GM10248 (cell line): ENCODE measurements at regions of chr6 and their contacts with region 1.

Region 1: GRCh38 chr6:85354761-85355618 is 94.9 kb upstream of the NT5E start:
- DNase-seq: peak; percentile 57
- CTCF ChIP-seq: peak; percentile 98

Region 2: DNA sequence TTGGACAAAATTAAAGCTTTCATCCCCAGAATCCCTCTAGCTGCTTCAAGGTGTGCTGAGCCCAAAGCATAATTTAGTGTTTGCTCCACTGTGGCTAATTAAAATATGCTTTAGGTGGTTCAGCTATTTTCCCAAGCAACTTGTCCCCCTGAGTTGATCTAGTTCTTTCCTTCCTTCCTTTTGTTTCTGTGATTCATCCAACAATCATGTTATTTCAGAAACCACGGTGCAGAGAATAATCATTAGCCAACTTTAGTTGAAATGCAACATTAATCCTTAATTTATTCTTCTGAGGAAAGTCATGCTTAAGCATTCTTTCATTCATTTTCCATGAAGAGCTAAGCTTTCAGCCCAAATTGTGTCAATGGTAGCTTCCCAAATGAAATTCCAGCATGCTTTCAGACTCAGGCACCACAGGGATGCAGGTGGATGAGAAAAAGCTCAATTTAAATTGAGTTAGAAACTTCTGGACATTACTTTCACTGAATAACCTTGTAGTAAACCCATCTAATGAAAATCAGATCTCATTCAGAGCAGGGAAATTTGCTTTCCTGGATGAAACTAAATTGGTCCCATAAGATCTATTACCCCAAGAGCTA is 114.1 kb before region 1 on chr6:
- CTCF ChIA-PET with region 1: no interaction called
- POLR2A ChIA-PET with region 1: no interaction called
- DNase-seq: no peak
- CTCF ChIP-seq: no peak

Region 3: DNA sequence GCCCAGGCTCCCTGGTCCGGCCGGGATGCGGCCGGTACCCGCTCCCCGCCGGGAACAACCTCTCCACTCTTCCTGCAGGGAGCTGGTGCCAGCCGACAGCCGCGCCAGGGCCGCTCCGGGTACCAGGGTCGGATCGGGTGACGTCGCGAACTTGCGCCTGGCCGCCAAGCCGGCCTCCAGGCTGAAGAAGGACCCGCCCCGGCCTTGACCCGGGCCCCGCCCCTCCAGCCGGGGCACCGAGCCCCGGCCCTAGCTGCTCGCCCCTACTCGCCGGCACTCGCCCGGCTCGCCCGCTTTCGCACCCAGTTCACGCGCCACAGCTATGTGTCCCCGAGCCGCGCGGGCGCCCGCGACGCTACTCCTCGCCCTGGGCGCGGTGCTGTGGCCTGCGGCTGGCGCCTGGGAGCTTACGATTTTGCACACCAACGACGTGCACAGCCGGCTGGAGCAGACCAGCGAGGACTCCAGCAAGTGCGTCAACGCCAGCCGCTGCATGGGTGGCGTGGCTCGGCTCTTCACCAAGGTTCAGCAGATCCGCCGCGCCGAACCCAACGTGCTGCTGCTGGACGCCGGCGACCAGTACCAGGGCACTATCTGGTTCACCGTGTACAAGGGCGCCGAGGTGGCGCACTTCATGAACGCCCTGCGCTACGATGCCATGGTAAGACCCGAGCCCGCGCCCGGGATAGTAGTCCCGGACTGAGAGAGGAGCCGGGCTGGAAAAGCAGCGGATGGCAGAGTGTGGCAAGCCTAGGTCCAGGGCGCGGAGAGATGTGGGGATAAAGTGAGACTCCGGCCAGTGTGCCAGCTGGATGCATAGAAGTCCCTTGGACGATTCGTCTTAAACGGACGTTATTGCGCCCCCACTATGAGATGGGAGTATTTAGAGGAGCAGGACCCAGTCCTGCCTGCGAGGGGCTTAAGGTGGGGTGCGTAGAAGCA is 95.1 kb after region 1 on chr6 and contains the start of gene NT5E:
- CTCF ChIA-PET with region 1: interaction called, 14 read pairs
- POLR2A ChIA-PET with region 1: no interaction called
- DNase-seq: peak; percentile 87
- CTCF ChIP-seq: peak; percentile 30

Region 4: DNA sequence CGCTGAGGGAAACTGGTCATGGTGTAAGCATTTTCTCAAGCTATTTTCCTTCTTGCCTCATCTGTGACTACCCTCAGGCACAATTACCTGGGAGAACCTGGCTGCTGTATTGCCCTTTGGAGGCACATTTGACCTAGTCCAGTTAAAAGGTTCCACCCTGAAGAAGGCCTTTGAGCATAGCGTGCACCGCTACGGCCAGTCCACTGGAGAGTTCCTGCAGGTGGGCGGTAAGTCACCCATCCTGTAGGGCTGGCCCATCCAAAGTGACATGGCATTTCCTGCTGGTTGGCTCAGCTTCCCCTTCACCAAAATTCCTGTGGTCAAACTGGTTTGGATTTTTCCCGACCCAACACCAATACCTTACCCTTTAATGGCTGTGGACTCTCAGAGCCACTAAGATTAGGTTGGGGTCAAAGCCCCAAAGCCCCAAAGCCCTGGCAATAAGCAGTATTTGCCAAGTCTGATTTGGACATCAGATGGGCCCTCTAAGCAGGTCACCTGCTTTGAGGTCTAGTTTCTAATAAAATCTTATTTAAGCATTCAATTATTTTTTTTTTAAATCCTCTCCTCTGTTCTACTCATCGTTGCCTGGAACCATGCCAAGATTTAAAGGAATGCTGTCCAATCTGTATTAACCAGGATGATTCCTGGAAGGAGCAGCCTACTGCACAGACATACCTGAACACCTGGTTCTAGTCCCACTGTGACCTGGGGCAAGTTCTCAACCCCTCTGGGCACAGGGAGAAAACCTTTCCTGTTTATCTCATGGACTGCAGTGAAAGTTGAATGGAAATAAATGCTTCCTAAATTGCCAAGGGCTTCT is 135.7 kb after region 1 on chr6:
- CTCF ChIA-PET with region 1: interaction called, 82 read pairs
- POLR2A ChIA-PET with region 1: no interaction called
- DNase-seq: no peak
- CTCF ChIP-seq: no peak

Region 5: GRCh38 chr6:85537055-85537494 is 182.1 kb after region 1 on chr6:
- CTCF ChIA-PET with region 1: interaction called, 19 read pairs
- POLR2A ChIA-PET with region 1: no interaction called
- DNase-seq: peak; percentile 15
- CTCF ChIP-seq: peak; percentile 35